ENCODE measurements at regions of chr10 and their contacts with region 1.

Region 1: GRCh38 chr10:114470956-114471905 is 66.9 kb upstream of the AFAP1L2 start:
- DNase-seq: no peak
- H3K4me3 ChIP-seq: no peak overlapping the region
- H3K27ac ChIP-seq: peak overlapping the region in 2 of 4 donors; percentile 29 to 31
- H3K4me1 ChIP-seq: peaks cover 16 to 27% (median 21%) of the 10 kb centered on the region in 4 donors
- H3K27me3 ChIP-seq: no peaks in the 10 kb centered on the region
- CTCF ChIP-seq: peak; percentile 92
- EP300 ChIP-seq: no peak
- POLR2A ChIP-seq: no peak

Region 2: DNA sequence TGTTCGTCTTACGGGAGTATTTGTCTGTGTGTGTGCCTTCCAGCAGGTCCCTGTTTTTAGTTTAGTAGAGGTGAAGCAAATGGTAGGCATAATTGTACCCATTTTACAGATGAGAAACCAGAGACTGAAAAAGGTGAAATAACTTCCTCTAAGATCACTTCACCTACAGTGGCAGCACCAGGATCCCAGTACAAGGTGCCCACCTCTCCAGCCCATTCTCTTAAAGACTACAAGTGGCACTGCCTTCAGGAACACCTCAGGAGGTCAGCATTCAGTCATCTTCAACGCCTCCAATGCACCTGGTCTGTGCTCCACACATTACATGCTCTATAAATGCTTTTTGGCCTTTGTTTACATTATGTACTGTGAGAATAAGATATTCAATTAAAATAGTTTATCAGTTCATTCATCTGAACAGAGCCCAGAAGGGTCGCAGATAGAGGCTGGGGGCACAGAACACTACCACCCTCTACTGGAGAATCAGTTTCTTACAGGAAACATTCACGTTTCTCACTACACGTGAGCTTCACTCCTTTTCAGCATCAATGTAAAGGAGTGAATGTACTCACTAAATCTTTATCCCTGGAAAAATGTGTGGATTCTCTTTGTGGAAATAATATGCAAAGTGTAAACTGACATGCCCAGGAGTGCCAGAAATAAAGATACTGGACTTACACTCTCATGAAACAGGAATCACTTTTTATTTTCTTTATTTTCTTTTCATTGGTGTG is 232.3 kb after region 1 on chr10:
- intact Hi-C with region 1: loop called (anchors 5 kb)
- DNase-seq: no peak
- H3K4me3 ChIP-seq: no peak overlapping the region
- H3K27ac ChIP-seq: no peak overlapping the region
- H3K4me1 ChIP-seq: peaks cover 1 to 8% (median 3%) of the 10 kb centered on the region in 4 donors
- H3K27me3 ChIP-seq: peaks cover 0 to 9% (median 0%) of the 10 kb centered on the region in 4 donors
- CTCF ChIP-seq: peak; percentile 52 to 65 (median 60)
- EP300 ChIP-seq: no peak
- POLR2A ChIP-seq: no peak

Region 3: DNA sequence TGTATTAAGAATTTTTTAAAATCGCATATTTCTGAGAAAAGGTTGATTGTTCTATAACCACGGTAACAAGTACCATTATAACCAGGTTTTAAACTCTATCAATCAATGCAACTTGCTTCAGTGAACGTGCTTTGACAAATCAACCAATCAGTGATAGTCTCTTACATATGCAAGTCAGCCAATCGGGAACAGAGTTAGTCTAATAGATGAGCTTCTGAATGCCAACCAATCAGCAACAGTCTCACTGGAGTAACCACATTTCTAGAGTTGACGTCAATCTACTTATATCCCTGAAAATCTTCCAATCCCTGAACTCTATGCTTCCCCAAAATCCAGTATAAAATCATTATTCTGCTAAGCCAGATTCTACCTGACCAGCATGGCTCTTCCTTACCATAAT is 422.0 kb after region 1 on chr10:
- intact Hi-C with region 1: no loop called
- DNase-seq: no peak
- H3K4me3 ChIP-seq: no peak overlapping the region
- H3K27ac ChIP-seq: no peak overlapping the region
- H3K4me1 ChIP-seq: no peaks in the 10 kb centered on the region
- H3K27me3 ChIP-seq: peaks cover 0 to 3% (median 0%) of the 10 kb centered on the region in 4 donors
- CTCF ChIP-seq: no peak
- EP300 ChIP-seq: no peak
- POLR2A ChIP-seq: no peak

Measured in esophagus muscularis mucosa (tissue), 4 donors.